PC-9 (cell line): ENCODE measurements at regions of chr19 and their contacts with region 1.

Region 1: DNA sequence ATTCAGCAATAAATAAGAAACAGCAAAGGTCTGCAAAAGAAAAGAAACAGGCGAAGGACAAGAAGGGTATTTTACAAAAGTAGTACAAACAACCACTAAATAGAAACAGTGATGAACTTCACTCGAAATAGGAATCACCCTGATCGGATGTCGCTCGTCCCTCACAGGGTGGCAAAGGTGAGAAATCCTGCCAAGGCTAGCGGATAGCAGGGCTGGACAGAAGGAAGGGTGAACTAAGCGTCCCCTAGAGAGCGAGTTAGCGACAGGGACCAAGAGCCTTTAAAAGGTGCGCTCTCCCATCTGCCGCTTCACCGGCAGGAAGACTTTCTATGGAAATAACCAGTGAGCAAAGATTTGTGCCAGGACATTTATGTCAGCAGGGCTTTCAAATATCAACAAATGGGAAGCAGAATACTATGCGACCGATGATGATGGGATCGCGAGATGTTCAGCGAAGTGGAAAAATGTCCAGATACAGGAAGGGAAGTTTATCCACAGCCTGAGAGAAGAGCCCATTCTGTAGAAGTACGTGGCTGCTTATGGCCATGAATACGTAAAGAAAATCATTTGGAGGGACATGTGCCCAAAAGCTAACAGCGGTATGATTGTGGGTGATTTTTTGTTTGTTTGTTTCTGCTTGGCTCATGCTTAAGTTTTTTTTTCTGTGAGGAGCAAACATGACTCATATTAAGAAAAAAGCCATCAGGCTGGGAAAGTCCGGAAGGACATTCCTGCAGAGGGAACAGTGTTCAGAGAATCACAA is 18.9 kb downstream of the ELAVL1 start:
- DNase-seq: peak; percentile 41 to 72
- H3K4me3 ChIP-seq: no peak overlapping the region
- H3K27ac ChIP-seq: peak overlapping the region; percentile 52
- H3K4me1 ChIP-seq: peaks cover 48% of the 10 kb centered on the region
- H3K27me3 ChIP-seq: no peaks in the 10 kb centered on the region
- CTCF ChIP-seq: no peak

Region 2: GRCh38 chr19:7808133-7808532 is 178.4 kb before region 1 on chr19:
- CTCF ChIA-PET with region 1: no interaction called
- POLR2A ChIA-PET with region 1: interaction called, 19 read pairs
- intact Hi-C with region 1: no loop called
- DNase-seq: peak in 1 of 2 experiments; percentile 84
- H3K4me3 ChIP-seq: peak overlapping the region; percentile 21; the same call in 1 of the 2 replicates
- H3K27ac ChIP-seq: peak overlapping the region; percentile 55
- H3K4me1 ChIP-seq: peaks cover 35% of the 10 kb centered on the region
- H3K27me3 ChIP-seq: no peaks in the 10 kb centered on the region
- CTCF ChIP-seq: no peak

Region 3: DNA sequence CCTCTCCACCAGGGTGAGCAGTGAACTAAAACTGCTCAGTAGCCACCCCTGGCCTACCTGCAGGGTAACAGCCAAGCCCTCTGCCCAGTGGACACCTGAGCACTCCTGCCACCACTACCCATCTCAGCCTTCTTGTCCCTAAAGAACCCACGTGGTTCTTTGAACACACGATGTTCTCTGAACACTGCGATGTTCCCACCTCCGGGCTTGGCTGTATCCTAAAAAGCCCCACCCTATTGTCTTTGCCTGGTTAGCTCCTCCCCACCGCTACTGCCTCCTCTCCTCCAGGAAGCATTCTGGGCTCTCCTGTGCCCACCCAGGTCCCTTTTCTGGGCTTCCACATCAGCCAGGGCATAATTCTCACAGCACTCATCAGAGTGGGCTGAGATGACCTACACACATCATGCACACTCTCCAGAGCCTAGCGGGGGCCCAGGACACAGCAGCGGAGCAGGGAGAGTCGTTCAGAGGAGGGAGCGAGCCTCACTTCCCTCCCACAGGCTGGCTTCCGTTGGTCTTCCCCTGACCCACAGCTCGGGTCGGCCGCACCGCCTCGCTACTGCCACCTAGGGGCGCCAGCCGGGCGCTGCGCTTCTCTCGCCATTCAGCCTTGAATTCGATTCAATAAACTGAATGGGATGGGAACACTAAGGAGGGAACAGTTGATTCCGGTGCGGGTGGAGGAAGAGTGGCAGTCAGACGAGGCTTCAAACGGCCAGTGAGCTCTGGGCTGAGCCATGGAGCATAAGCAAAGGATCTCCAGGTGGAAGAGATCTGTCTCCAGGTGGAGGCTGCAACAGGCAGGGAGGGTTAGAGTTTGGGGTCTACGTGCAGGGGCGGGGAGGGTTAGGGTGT is 15.7 kb after region 1 on chr19:
- CTCF ChIA-PET with region 1: no interaction called
- POLR2A ChIA-PET with region 1: no interaction called
- intact Hi-C with region 1: loop called (anchors 1 kb)
- DNase-seq: peak; percentile 76 to 84
- H3K4me3 ChIP-seq: peak overlapping the region; percentile 11; the same call in 1 of the 2 replicates
- H3K27ac ChIP-seq: 0 out of 2 replicates have a peak overlapping the region, but pooled peaks have one; percentile 2
- H3K4me1 ChIP-seq: peaks cover 30% of the 10 kb centered on the region
- H3K27me3 ChIP-seq: no peaks in the 10 kb centered on the region
- CTCF ChIP-seq: peak; percentile 99